Posterior cingulate gyrus (tissue), 11 donors: ENCODE measurements at regions of chr1 and their contacts with region 1.

Region 1: GRCh38 chr1:248140846-248141245 is 4.1 kb upstream of the OR2M5 start:
- DNase-seq: no peak

Region 2: DNA sequence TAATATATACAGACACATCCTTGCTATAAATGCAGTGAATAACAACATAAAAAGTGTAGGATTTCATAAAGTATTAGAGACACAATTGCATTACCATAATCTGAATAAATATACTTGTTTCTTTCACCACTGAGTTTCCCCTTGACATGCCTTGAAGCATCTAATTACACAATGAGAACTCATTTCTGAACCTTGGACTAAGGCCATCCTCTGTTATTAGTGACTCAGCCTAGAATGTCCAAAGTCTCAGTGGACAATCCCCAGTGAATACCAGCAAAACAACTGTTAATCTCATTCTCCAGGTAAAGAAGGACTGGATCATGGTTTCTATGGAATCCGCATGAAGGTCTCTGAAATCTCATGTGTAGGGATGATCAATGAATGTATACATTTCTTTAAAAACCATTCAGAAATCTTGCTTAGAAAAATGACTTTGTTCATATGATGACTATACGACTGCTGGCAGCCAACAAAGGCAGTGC is 127.6 kb before region 1 on chr1 and contains the start of gene OR2L5:
- intact Hi-C with region 1: no loop called
- DNase-seq: no peak

Region 3: DNA sequence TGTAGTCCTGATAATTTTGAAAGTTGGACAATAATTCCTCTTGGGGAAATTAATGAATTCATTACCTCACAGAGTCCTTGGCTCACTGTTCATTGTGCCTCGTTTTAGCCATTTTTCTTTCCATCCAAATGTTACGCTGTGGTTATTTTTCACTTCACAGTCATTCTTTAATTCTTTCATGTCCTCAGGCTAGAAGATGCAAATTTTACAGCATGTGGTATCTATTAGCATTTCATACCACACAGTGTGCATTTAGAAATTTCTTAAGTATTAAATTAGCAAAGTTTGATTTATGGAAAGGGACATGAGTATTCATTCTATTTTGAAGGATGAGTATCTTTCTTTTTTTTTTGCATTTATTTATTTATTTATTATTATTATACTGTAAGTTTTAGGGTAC is 75.8 kb before region 1 on chr1:
- intact Hi-C with region 1: no loop called
- DNase-seq: no peak

Region 4: GRCh38 chr1:248183996-248184395 is 43.1 kb after region 1 on chr1:
- intact Hi-C with region 1: loop called (anchors 5 kb)
- DNase-seq: no peak